ENCODE measurements at regions of chr6 and their contacts with region 1.

Region 1: GRCh38 chr6:43334466-43335095 is 26.0 kb upstream of the CRIP3 start:
- DNase-seq: peak in 1 of 2 donors; percentile 77
- H3K4me3 ChIP-seq: no peak overlapping the region
- H3K27ac ChIP-seq: peak overlapping the region in 1 of 5 donors; percentile 8
- H3K4me1 ChIP-seq: peaks cover 7 to 19% (median 9%) of the 10 kb centered on the region in 4 donors
- H3K27me3 ChIP-seq: no peaks in the 10 kb centered on the region
- CTCF ChIP-seq: peak in 4 of 7 experiments; percentile 9 to 60 (median 36)
- EP300 ChIP-seq: no peak
- POLR2A ChIP-seq: no peak

Region 2: DNA sequence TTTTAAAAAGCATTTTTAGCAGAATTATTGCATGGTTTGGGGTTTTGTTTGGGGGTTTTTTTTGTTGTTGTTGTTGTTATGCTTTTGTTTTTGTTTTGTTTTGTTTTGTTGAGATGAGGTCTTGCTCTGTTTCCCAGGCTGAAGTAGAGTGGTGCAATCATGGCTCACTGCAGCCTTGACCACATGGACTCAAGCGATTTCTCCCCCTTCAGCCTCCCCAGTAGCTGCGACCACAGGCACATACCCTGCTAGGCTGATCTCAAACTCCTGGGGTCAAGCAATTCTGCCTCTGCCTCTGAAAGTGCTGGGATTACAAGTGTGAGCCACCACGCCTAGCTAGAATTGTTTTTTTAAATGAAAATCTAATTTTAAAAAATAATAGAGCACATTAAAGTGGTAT is 735.0 kb before region 1 on chr6:
- intact Hi-C with region 1: no loop called
- DNase-seq: no peak
- H3K4me3 ChIP-seq: no peak overlapping the region
- H3K27ac ChIP-seq: no peak overlapping the region
- H3K4me1 ChIP-seq: no peaks in the 10 kb centered on the region
- H3K27me3 ChIP-seq: no peaks in the 10 kb centered on the region
- CTCF ChIP-seq: no peak
- EP300 ChIP-seq: no peak
- POLR2A ChIP-seq: no peak

Region 3: DNA sequence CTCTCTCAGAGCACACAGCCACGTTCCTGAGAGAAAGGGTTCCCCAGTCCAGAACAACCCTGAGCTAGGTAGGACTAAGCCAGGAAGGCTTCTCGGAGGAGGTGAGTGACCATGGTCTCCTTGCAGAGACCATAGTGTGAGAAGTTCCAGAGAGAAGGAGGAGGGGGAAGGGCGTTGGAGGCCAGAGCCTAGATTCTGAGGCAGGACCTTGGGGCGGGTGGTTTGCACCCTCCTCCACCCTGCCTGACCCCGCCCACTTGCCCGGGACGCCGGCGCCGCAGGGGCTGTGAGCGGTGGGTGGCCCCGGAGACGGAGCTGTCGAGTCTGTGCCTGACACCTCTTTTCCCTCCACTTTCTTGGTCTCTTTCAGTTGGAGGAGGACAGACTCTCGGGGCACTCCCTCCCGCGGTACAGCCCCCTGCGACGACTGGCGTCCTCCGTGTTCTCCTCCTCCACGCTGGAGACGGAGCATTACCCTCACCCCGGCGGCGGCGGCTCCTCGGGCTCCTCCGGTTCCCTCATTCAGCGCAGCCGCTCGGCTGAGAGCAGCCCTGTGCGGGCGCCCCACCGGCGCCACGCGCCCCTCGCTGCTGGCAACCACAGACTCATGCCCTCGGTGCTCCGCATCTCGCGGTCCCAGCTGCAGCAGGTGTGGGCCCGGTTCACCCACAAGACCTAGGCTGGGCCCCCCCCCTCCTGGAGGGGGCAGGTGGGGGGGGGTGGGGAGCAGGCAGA is 65.1 kb before region 1 on chr6:
- intact Hi-C with region 1: loop called (anchors 10 kb)
- DNase-seq: peak; percentile 38 to 78
- H3K4me3 ChIP-seq: peak overlapping the region; percentile 40 to 49 (median 43)
- H3K27ac ChIP-seq: peak overlapping the region in 4 of 5 donors; percentile 42 to 60 (median 50)
- H3K4me1 ChIP-seq: peaks cover 21 to 34% (median 28%) of the 10 kb centered on the region in 4 donors
- H3K27me3 ChIP-seq: peaks cover 0 to 44% (median 8%) of the 10 kb centered on the region in 3 donors
- CTCF ChIP-seq: no peak
- EP300 ChIP-seq: no peak
- POLR2A ChIP-seq: no peak

Measured in stomach (tissue), 19 donors.